Natural killer cell (primary cell): ENCODE measurements at regions of chr12 and their contacts with region 1.

Region 1: GRCh38 chr12:56468216-56469006 is at the start of gene SPRYD4:
- DNase-seq: peak; percentile 93 to 97
- ATAC-seq: peak; percentile 91 to 98 (median 97)
- H3K4me3 ChIP-seq: peak within 1 kb of the TSS; percentile 80
- H3K4me3 Mint-ChIP-seq: peak within 1 kb of the TSS; percentile 95
- H3K27ac ChIP-seq: peak within 1 kb of the TSS; percentile 92
- H3K27ac Mint-ChIP-seq: peak within 1 kb of the TSS; percentile 94
- H3K4me1 ChIP-seq: peaks cover 20% of the 10 kb centered on the region
- H3K4me1 Mint-ChIP-seq: peaks cover 22 to 25% of the 10 kb centered on the region in 2 donors
- H3K27me3 ChIP-seq: no peaks in the 10 kb centered on the region
- H3K27me3 Mint-ChIP-seq: no peaks in the 10 kb centered on the region
- CTCF ChIP-seq: no peak
- total RNA-seq, gene SPRYD4: 5.6 to 6.2 (median 5.6) TPM

Region 2: DNA sequence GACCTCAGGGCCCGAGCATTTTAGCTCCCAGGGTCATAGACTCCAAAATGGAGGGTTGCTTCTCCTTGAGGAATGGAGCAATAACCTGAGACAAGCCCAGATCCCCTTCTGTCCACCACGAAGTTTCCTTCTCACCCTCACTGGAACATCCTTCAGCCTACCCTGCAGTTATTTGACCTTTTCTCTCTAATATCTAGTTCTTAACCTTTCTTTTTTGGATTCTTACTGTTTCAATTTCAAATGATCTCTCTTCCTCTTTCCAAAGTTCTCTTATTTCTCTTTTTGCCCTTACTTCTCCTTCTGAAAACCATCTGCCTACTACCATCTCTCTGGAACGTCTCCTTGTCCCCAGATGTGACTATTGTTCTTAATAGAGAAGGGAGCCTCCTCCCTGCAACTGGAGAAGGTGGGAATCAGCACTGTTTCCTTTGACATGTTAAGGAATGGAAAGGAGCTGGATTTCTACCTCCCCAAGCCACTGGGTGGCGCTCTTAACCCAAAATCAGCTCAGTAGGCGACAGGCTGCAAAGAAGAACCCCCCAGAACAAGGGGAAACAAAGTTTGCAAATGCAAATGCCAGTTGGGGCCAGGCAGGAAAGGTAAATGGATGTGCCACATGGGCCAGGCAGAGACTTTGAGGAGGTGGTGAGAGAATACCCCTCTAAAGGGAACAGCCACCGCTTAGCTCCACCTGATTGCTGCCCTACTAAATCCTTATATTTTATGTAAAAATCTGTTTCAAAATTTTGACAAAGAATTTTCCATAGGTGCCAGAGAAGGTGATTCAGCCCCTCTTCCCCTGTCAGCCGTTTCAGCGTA is 1941.4 kb before region 1 on chr12:
- intact Hi-C with region 1: no loop called
- DNase-seq: peak; percentile 17 to 58
- ATAC-seq: no peak
- H3K4me3 ChIP-seq: no peak overlapping the region
- H3K4me3 Mint-ChIP-seq: no peak overlapping the region
- H3K27ac ChIP-seq: no peak overlapping the region
- H3K27ac Mint-ChIP-seq: peak overlapping the region in 1 of 2 donors; percentile 58
- H3K4me1 ChIP-seq: no peaks in the 10 kb centered on the region
- H3K4me1 Mint-ChIP-seq: peaks cover 0 to 23% of the 10 kb centered on the region in 2 donors
- H3K27me3 ChIP-seq: no peaks in the 10 kb centered on the region
- H3K27me3 Mint-ChIP-seq: no peaks in the 10 kb centered on the region
- CTCF ChIP-seq: peak; percentile 56

Region 3: GRCh38 chr12:56237552-56237951 is 230.9 kb before region 1 on chr12:
- intact Hi-C with region 1: no loop called
- DNase-seq: no peak
- ATAC-seq: no peak
- H3K4me3 ChIP-seq: no peak overlapping the region
- H3K4me3 Mint-ChIP-seq: no peak overlapping the region
- H3K27ac ChIP-seq: no peak overlapping the region
- H3K27ac Mint-ChIP-seq: no peak overlapping the region
- H3K4me1 ChIP-seq: no peaks in the 10 kb centered on the region
- H3K4me1 Mint-ChIP-seq: peaks cover 0 to 7% of the 10 kb centered on the region in 2 donors
- H3K27me3 ChIP-seq: no peaks in the 10 kb centered on the region
- H3K27me3 Mint-ChIP-seq: no peaks in the 10 kb centered on the region
- CTCF ChIP-seq: no peak

Region 4: GRCh38 chr12:56258057-56258819 is 210.2 kb before region 1 on chr12 and contains the start of gene ANKRD52:
- intact Hi-C with region 1: loop called (anchors 10 kb)
- DNase-seq: peak; percentile 84 to 93
- ATAC-seq: peak; percentile 97 to 98 (median 97)
- H3K4me3 ChIP-seq: peak within 1 kb of the TSS; percentile 75
- H3K4me3 Mint-ChIP-seq: peak within 1 kb of the TSS; percentile 94
- H3K27ac ChIP-seq: peak within 1 kb of the TSS; percentile 63
- H3K27ac Mint-ChIP-seq: peak within 1 kb of the TSS; percentile 80 to 88
- H3K4me1 ChIP-seq: peaks cover 24% of the 10 kb centered on the region
- H3K4me1 Mint-ChIP-seq: peaks cover 8 to 26% of the 10 kb centered on the region in 2 donors
- H3K27me3 ChIP-seq: no peaks in the 10 kb centered on the region
- H3K27me3 Mint-ChIP-seq: no peaks in the 10 kb centered on the region
- CTCF ChIP-seq: peak; percentile 82
- total RNA-seq, gene ANKRD52: 34.1 to 52.2 (median 51.4) TPM

Region 5: DNA sequence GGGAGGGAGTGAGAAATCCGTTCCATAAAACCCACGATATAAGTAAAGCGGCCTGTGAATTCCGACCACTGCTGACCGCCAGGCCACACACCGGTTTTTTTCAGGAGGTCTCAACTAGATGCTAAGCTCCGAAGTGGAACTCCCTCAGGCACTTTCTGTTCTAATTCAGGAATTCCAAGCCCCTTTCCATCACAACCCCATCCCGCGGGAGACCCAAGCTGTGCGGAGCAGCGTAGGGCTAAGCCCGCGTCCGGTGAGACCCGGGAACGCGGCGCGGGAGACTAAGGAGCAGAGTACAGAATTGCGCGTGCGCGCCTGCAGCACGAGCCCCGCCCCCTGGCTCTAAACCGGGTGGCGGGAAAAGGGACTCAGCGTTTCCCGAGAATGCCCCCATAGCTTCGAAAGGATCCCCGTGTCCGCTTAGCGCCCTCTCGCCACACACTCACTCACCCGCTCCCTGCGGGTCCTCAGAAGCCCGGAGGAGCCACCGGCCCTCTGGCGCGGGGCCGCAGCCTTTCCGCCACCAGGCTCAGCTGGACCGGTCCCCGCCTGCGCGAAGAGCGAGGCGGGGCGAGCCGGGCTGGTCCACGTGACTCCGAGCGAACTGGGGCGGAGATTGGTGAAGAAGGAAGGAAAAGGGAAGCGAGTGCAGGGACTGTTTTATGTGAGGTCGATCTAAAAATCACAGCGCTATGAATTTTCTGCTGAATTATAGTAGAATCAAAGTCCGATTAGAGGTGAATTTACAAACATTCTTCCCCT is 19.4 kb before region 1 on chr12 and contains the start of gene TIMELESS:
- intact Hi-C with region 1: loop called (anchors 2 kb)
- DNase-seq: peak; percentile 83 to 93
- ATAC-seq: peak; percentile 95 to 97 (median 97)
- H3K4me3 ChIP-seq: peak within 1 kb of the TSS; percentile 95
- H3K4me3 Mint-ChIP-seq: peak within 1 kb of the TSS; percentile 95
- H3K27ac ChIP-seq: peak within 1 kb of the TSS; percentile 75
- H3K27ac Mint-ChIP-seq: peak within 1 kb of the TSS; percentile 87 to 95
- H3K4me1 ChIP-seq: peaks cover 13% of the 10 kb centered on the region
- H3K4me1 Mint-ChIP-seq: peaks cover 14 to 23% of the 10 kb centered on the region in 2 donors
- H3K27me3 ChIP-seq: no peaks in the 10 kb centered on the region
- H3K27me3 Mint-ChIP-seq: peaks cover 0 to 3% of the 10 kb centered on the region in 2 donors
- CTCF ChIP-seq: no peak
- total RNA-seq, gene TIMELESS: 11.1 to 12.3 (median 11.7) TPM

Region 6: DNA sequence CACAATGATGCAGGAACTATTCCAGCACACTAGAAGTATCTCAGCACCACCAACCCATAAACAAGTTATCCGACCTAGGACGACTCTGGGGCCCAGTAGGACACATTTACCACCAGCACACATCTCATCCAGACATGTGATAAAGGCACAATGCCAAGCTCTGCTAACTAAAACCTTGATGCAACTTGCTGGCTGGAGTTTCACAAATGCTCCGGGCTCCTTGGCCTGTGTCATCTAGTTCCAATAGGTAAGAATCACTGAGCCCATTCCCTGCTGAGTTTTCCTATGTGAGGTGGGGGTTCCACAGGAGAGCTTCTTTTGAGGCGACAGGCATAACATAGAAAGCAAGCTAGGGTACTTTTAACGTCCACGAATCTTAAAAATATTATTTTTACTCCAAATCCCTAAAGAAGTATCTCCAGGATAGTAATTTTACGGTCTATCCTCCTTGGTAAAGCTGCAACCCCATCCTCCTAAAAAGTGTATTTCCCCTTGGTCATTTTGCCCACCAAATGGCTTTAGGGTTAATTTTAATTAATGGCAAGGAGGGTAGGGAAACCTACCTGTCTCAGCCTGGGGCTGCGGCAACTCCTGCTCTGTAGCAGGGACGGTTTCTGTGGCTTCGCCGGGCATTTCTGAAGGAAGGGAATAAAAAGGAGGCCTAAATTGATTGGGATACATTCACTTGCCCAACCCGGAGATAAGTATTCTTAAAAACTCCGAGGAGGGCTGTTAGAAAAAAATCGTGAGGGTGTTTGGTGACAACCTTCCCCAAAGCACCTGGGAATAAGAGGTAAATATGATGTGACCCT is 255.7 kb after region 1 on chr12:
- intact Hi-C with region 1: no loop called
- DNase-seq: peak in 1 of 2 donors; percentile 47
- ATAC-seq: no peak
- H3K4me3 ChIP-seq: peak overlapping the region; percentile 99
- H3K4me3 Mint-ChIP-seq: peak overlapping the region; percentile 99
- H3K27ac ChIP-seq: peak overlapping the region; percentile 98
- H3K27ac Mint-ChIP-seq: peak overlapping the region; percentile 98
- H3K4me1 ChIP-seq: peaks cover 49% of the 10 kb centered on the region
- H3K4me1 Mint-ChIP-seq: peaks cover 68 to 70% of the 10 kb centered on the region in 2 donors
- H3K27me3 ChIP-seq: no peaks in the 10 kb centered on the region
- H3K27me3 Mint-ChIP-seq: no peaks in the 10 kb centered on the region
- CTCF ChIP-seq: no peak